ENCODE measurements at regions of chr3 and their contacts with region 1.

Region 1: DNA sequence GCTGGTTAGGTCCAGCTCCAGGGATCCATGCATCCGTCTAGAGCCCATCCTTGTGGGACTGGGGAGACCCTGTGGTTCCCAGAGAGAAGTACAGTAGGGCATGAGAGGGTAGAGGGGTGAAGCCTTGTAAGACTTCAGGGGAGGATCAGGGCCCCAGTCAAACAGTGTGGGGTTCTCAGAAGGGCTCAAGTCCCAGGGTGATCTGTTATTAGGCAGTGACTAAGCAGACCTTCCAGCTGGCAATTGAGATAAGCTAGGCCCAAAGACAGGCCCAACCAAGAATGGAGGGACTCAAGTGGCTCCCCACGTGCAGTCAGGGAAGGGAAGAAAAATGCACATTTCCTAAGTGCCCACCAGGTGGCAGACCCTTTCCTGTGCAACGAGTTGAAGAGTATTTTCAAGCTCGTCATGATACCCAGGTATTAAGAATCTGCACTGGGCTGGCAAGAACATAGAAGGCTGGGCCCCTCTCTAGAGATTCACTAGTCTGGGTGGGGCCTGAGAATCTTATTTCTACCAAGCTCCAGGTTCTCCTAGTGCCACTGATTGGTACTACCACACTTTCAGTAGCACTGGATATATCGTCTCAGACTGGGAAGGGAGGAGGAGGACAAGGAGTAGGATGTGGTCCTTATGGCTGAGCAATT is 240.8 kb downstream of the NR1D2 start:
- DNase-seq: peak in 1 of 2 donors; percentile 57
- ATAC-seq: peak; percentile 68
- H3K4me3 ChIP-seq: no peak overlapping the region
- H3K27ac ChIP-seq: peak overlapping the region; percentile 44 to 72
- H3K4me1 ChIP-seq: peaks cover 4 to 5% of the 10 kb centered on the region in 2 donors
- H3K27me3 ChIP-seq: no peaks in the 10 kb centered on the region

Region 2: GRCh38 chr3:24215502-24215901 is 29.6 kb after region 1 on chr3:
- intact Hi-C with region 1: loop called in 1 of 2 experiments (anchors 5 kb)
- DNase-seq: no peak
- ATAC-seq: no peak
- H3K4me3 ChIP-seq: no peak overlapping the region
- H3K27ac ChIP-seq: peak overlapping the region; percentile 43 to 74
- H3K4me1 ChIP-seq: peaks cover 6 to 21% of the 10 kb centered on the region in 2 donors
- H3K27me3 ChIP-seq: no peaks in the 10 kb centered on the region

Region 3: DNA sequence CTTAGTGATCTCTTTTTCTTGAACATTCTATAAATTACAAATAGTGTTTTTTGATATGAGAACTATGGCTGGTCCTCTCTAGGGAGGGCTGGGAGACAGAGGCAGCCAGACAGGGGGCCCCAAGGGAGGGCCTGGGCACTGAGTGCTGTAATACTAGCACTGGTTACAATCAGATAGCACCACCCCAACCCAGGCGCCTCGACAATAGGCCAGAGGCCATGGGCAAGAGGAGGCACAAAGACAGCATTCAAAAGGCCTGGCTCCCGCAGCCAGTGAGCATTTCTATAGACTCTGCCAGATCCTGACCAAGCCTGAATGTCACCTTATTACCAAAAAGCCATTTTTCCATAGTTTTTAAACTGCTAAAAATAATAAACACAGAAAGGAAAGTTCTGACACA is 150.2 kb after region 1 on chr3:
- intact Hi-C with region 1: no loop called
- DNase-seq: no peak
- ATAC-seq: no peak
- H3K4me3 ChIP-seq: no peak overlapping the region
- H3K27ac ChIP-seq: peak overlapping the region in 1 of 2 donors; percentile 17
- H3K4me1 ChIP-seq: peaks cover 3% of the 10 kb centered on the region in 2 donors
- H3K27me3 ChIP-seq: no peaks in the 10 kb centered on the region

Measured in aorta (tissue), 5 donors.